OCI-LY7 (cell line): ENCODE measurements at regions of chr10 and their contacts with region 1.

Region 1: GRCh38 chr10:51653025-51653424 is 46.4 kb downstream of the CSTF2T start:
- DNase-seq: no peak
- H3K4me3 ChIP-seq: no peak overlapping the region
- H3K27ac ChIP-seq: no peak overlapping the region
- H3K4me1 ChIP-seq: no peaks in the 10 kb centered on the region
- CTCF ChIP-seq: no peak

Region 2: GRCh38 chr10:51137756-51138529 is 515.1 kb before region 1 on chr10:
- CTCF ChIA-PET with region 1: no interaction called
- POLR2A ChIA-PET with region 1: no interaction called
- intact Hi-C with region 1: loop called (anchors 10 kb)
- DNase-seq: no peak
- H3K4me3 ChIP-seq: no peak overlapping the region
- H3K27ac ChIP-seq: no peak overlapping the region
- H3K4me1 ChIP-seq: no peaks in the 10 kb centered on the region
- CTCF ChIP-seq: no peak

Region 3: GRCh38 chr10:51206500-51206899 is 446.5 kb before region 1 on chr10:
- CTCF ChIA-PET with region 1: no interaction called
- POLR2A ChIA-PET with region 1: no interaction called
- intact Hi-C with region 1: no loop called
- DNase-seq: no peak
- H3K4me3 ChIP-seq: no peak overlapping the region
- H3K27ac ChIP-seq: no peak overlapping the region
- H3K4me1 ChIP-seq: no peaks in the 10 kb centered on the region
- CTCF ChIP-seq: no peak

Region 4: DNA sequence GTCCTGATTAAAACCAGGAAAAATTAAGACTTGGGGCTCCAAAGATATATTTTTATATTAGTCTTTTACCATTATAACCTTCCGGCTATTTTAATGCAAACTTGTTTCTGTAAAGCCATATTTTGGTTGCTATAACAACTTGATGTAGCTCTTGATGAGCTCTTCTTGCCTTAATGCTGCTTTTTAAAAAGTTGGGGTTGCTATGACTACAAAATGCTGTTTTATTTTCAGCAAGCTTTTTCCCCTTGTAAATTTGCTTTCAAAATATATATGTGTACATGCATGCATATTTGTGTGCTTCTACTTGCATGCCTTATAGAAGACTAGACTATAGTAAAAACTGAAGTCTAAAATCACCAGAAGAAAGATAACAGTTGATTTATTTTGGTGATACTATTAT is 53.4 kb before region 1 on chr10:
- CTCF ChIA-PET with region 1: no interaction called
- POLR2A ChIA-PET with region 1: no interaction called
- intact Hi-C with region 1: loop called (anchors 10 kb)
- DNase-seq: no peak
- H3K4me3 ChIP-seq: no peak overlapping the region
- H3K27ac ChIP-seq: no peak overlapping the region
- H3K4me1 ChIP-seq: no peaks in the 10 kb centered on the region
- CTCF ChIP-seq: no peak